ENCODE measurements at regions of chr1 and their contacts with region 1.

Region 1: DNA sequence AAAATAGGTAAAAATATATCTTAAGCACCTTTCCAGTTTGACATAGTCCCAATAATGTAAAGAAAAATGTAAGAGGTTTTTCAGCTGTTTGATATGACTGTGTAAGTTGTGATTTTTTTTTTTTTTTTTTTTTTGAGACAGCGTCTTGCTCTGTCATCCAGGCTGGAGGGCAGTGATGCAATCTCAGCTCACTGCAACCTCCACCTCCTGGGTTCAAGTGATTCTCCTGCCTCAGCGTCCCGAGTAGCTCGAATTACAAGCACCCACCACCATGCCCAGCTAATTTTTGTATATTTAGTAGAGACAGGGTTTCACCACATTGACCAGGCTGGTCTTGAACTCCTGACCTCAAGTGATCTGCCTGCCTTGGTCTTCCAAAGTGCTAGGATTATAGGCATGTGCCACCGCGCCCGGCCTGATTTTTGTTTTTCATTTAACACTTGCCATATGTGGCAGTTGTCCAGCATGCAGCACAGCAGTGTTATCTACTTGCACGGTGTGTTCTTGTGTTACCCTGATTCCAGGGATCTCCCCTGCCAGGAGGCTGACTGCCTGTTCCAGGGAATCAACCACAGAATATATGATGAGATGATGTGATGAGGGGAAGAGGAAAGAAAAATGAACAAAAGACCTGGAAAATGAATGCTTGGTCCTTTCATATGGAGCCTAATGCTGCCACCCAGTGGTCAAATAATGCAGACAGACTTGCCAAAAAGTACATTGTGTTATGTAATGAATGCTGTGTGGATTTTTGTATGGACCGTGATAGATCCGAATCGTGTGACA is 79.0 kb downstream of the RAVER2 start:
- DNase-seq: peak; percentile 64
- H3K4me3 ChIP-seq: no peak overlapping the region; a peak in 1 of 4 replicates
- H3K27ac ChIP-seq: no peak overlapping the region
- H3K4me1 ChIP-seq: no peaks in the 10 kb centered on the region; a peak in 2 of 4 replicates
- H3K27me3 ChIP-seq: no peaks in the 10 kb centered on the region
- CTCF ChIP-seq: peak; percentile 91
- EP300 ChIP-seq: no peak
- RAD21 ChIP-seq: peak; percentile 94

Region 2: DNA sequence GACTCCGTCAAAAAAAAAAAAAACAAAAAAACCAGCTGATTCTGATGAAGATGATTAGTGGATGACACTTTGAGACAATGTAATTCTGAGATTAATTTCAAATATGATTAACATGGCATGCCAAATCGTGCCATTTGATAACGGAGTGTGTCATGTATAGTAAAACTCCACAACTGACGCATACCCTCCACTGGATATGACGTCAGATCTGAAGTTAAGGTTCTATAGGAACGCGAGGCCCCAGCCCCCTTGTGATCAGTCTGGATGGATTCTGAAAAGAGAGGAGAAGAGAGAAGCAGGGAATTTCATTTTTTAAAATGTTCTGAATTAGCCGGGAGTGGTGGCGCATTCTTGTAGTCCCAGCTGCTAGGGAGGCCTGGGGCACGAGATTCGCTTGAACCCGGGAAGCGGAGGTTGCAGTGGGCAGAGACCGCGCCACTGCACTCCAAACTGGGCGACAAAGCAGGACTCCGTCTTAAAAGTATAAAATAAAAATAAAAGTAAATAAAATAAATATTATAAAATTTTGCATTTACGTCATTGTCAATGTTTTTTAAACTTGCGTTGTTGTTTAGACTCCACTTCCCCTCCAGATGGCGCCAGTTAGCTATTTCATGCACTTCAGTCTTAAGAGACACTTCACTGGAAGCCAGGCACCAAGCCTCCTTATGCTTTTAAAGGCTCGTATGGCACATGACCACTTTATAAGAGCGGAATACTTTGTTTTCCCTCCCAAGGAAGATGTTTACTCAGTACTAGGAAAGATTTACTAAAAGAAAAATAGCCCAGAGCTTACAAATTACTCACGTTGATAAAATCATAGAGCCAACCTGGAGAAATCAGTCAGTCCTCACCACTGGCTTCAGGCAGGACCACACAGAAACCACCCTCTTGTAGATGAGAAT is 555.0 kb before region 1 on chr1:
- CTCF ChIA-PET with region 1: interaction called, 25 read pairs
- POLR2A ChIA-PET with region 1: no interaction called
- DNase-seq: peak; percentile 57
- H3K4me3 ChIP-seq: no peak overlapping the region
- H3K27ac ChIP-seq: peak overlapping the region in 1 of 2 experiments; percentile 8; a peak in 1 of 4 replicates
- H3K4me1 ChIP-seq: peaks cover 9% of the 10 kb centered on the region in 2 experiments; a peak in 2 of 4 replicates
- H3K27me3 ChIP-seq: no peaks in the 10 kb centered on the region; the same call in 1 of the 2 replicates
- CTCF ChIP-seq: peak; percentile 71
- EP300 ChIP-seq: no peak
- RAD21 ChIP-seq: peak; percentile 97

Region 3: GRCh38 chr1:64686828-64687724 is 136.8 kb before region 1 on chr1:
- CTCF ChIA-PET with region 1: interaction called, 14 read pairs
- POLR2A ChIA-PET with region 1: no interaction called
- DNase-seq: peak; percentile 49
- H3K4me3 ChIP-seq: no peak overlapping the region
- H3K27ac ChIP-seq: 0 out of 4 replicates have a peak overlapping the region, but pooled peaks of 1 of the 2 experiments have one; percentile 6
- H3K4me1 ChIP-seq: peaks cover 0 to 25% of the 10 kb centered on the region in 2 experiments; a peak in 3 of 4 replicates
- H3K27me3 ChIP-seq: no peaks in the 10 kb centered on the region
- CTCF ChIP-seq: peak; percentile 88
- EP300 ChIP-seq: no peak
- RAD21 ChIP-seq: peak; percentile 74

Region 4: DNA sequence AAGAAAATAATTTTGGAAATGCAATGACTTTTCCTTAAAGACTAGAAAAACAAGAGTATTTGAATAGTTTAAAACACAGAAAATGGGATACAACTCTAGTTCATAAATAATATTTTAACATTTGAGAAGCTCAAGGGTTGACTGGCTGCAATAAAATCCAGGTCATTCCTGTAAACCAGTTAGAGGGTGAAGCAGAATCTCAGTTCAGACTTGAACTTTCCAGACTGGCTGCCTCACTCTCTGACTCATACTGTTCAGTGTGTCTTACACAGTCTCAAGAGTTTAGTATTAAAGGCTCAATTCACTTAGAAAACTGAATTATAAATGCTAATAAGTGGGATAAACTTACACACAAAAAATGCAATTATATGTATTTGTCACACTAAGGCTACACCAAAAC is 10.8 kb after region 1 on chr1:
- CTCF ChIA-PET with region 1: interaction called, 15 read pairs
- POLR2A ChIA-PET with region 1: no interaction called
- DNase-seq: no peak
- H3K4me3 ChIP-seq: no peak overlapping the region
- H3K27ac ChIP-seq: peak overlapping the region in 1 of 2 experiments; percentile 56; a peak in 2 of 4 replicates
- H3K4me1 ChIP-seq: peaks cover 0 to 7% of the 10 kb centered on the region in 2 experiments; a peak in 2 of 4 replicates
- H3K27me3 ChIP-seq: no peaks in the 10 kb centered on the region
- CTCF ChIP-seq: no peak
- EP300 ChIP-seq: no peak
- RAD21 ChIP-seq: no peak

Region 5: GRCh38 chr1:64975740-64976139 is 151.9 kb after region 1 on chr1:
- CTCF ChIA-PET with region 1: no interaction called
- POLR2A ChIA-PET with region 1: no interaction called
- DNase-seq: no peak
- H3K4me3 ChIP-seq: no peak overlapping the region
- H3K27ac ChIP-seq: no peak overlapping the region
- H3K4me1 ChIP-seq: no peaks in the 10 kb centered on the region
- H3K27me3 ChIP-seq: no peaks in the 10 kb centered on the region
- CTCF ChIP-seq: no peak
- EP300 ChIP-seq: no peak
- RAD21 ChIP-seq: no peak